ENCODE measurements at regions of chr16 and their contacts with region 1.

Region 1: DNA sequence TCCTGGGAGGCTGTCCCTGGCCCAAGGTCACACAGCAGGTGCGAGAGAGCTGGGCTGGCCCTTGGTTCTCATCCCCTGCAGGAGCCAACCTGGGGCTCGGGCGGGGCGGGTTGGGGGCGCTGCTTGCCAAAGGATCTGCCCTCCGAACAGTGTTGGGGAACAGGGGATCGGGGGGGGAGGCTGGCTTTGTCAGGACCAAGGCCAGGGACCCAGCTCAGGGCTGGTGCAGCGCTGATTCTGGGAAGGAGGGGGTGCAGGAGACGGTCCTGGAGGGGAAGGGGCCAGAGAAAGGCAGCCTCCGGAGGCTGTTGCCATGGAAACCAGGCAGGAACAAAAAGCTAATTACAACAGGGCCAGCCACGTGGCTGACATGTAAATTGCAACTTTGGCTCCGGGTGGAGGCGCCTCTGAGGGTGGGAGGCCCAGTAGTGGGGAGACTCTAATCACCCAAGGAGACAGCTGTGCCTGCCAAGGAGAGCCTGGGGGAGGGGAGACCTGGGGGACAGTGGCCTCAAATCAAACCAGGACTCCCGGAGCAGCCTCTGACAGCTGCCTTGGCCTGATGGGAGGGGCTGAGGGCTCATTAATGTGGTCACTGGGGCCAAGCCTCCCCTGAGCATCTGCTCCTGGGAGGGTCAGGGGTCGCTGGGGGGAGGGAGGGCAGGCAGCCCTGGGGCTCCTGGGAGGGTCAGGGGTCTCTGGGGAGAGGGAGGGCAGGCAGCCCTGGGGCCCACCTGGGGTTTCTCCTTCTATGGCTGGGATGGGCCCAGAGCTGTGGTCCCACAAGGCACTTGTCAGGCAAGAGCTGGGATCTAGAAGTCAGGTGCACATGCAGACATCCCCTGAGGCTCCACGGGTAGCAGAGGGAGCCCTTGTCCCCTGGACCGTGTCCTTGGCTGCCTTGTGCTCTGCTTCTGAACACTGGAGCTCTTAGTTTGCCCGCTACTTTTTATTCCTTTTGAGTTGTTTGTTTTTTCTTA is 1.4 kb downstream of the TUBB3 start:
- DNase-seq: peak in 8 of 14 experiments; percentile 29 to 77 (median 40)
- ATAC-seq: peak; percentile 53
- H3K4me3 ChIP-seq: no peak overlapping the region
- H3K4me3 Mint-ChIP-seq: no peak overlapping the region
- H3K27ac ChIP-seq: no peak overlapping the region
- H3K27ac Mint-ChIP-seq: no peak overlapping the region
- H3K4me1 ChIP-seq: peaks cover 67% of the 10 kb centered on the region
- H3K4me1 Mint-ChIP-seq: peaks cover 35% of the 10 kb centered on the region
- H3K27me3 ChIP-seq: peaks cover 67 to 71% of the 10 kb centered on the region in 2 experiments
- H3K27me3 Mint-ChIP-seq: peaks cover 32% of the 10 kb centered on the region
- CTCF ChIP-seq: no peak

Region 2: DNA sequence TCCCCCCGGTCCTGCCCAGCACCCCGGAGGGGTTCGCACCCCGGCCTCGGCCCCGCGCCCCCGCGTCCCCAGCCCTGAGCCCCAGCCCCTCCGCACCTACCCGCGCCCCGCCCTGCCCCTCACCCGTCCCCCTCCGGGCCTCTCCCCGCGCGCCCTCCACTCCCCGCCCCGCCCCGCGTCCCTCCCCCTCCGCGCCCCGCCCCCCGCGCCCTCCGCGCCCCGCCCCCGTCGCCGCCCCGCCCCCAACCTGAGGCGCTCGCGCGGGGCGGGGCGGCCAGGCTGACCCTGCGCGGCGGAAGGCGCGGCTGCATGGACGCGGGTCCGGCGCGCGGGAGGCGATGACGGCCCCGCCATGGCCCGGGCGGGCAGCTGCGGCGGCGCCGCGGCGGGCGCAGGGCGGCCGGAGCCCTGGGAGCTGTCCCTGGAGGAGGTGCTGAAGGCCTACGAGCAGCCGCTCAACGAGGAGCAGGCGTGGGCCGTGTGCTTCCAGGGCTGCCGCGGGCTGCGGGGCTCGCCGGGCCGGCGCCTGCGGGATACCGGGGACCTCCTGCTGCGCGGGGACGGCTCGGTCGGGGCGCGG is 96.3 kb before region 1 on chr16 and contains the start of gene SPIRE2:
- CTCF ChIA-PET with region 1: no interaction called
- POLR2A ChIA-PET with region 1: no interaction called
- intact Hi-C with region 1: loop called in 1 of 2 experiments (anchors 5 kb)
- DNase-seq: peak; percentile 49 to 90 (median 68)
- ATAC-seq: peak; percentile 98
- H3K4me3 ChIP-seq: no peak within 1 kb of the TSS
- H3K4me3 Mint-ChIP-seq: peak within 1 kb of the TSS; percentile 27
- H3K27ac ChIP-seq: no peak within 1 kb of the TSS
- H3K27ac Mint-ChIP-seq: no peak within 1 kb of the TSS
- H3K4me1 ChIP-seq: peaks cover 12% of the 10 kb centered on the region
- H3K4me1 Mint-ChIP-seq: peaks cover 4% of the 10 kb centered on the region
- H3K27me3 ChIP-seq: peaks cover 14 to 25% of the 10 kb centered on the region in 2 experiments
- H3K27me3 Mint-ChIP-seq: peaks cover 29% of the 10 kb centered on the region
- CTCF ChIP-seq: no peak
- total RNA-seq, gene SPIRE2: 1.1 TPM

Region 3: DNA sequence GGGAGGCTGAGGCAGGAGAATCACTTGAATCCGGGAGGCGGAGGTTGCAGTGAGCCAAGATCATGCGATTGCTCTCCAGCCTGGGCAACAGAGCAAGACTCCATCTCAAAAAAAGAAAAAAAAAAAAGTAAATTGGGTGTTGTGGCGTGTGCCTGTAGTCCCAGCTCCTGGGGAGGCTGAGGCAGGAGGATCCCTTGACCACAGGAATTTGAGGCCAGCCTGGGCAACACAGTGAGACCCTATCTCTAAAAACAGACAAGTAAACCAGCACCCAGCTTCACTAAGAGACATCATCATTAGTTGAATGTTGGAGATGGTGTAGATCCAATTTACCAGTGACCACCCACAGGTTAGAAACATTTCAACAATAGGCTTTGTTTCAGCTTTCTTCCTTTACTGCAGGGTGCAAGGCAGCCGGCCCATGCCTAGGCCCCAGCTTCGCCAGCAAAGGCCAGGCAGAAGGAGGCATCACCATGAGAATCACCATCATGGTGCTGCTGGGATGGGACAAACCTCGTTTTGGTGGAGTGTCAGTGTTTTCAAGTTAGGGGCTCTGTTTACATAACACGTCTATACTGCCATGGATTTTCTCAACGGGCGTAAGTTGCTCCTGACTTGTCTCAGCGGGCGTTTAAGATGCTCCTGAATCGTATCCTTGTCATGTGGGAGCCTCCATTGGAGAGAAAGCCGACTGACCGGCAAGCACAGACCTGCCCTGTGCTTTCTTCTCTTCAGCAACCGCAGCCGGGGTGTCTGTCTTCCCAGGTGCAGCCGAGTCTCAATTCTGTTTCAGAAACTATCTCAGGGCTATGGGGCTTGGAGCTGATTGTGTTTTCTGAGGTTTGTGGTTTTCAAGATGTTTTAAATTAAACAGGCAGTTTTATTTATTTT is 43.9 kb before region 1 on chr16:
- CTCF ChIA-PET with region 1: no interaction called
- POLR2A ChIA-PET with region 1: no interaction called
- intact Hi-C with region 1: no loop called
- DNase-seq: no peak
- ATAC-seq: no peak
- H3K4me3 ChIP-seq: no peak overlapping the region
- H3K4me3 Mint-ChIP-seq: no peak overlapping the region
- H3K27ac ChIP-seq: no peak overlapping the region
- H3K27ac Mint-ChIP-seq: peak overlapping the region; percentile 28
- H3K4me1 ChIP-seq: no peaks in the 10 kb centered on the region
- H3K4me1 Mint-ChIP-seq: peaks cover 7% of the 10 kb centered on the region
- H3K27me3 ChIP-seq: no peaks in the 10 kb centered on the region
- H3K27me3 Mint-ChIP-seq: no peaks in the 10 kb centered on the region
- CTCF ChIP-seq: no peak

Region 4: DNA sequence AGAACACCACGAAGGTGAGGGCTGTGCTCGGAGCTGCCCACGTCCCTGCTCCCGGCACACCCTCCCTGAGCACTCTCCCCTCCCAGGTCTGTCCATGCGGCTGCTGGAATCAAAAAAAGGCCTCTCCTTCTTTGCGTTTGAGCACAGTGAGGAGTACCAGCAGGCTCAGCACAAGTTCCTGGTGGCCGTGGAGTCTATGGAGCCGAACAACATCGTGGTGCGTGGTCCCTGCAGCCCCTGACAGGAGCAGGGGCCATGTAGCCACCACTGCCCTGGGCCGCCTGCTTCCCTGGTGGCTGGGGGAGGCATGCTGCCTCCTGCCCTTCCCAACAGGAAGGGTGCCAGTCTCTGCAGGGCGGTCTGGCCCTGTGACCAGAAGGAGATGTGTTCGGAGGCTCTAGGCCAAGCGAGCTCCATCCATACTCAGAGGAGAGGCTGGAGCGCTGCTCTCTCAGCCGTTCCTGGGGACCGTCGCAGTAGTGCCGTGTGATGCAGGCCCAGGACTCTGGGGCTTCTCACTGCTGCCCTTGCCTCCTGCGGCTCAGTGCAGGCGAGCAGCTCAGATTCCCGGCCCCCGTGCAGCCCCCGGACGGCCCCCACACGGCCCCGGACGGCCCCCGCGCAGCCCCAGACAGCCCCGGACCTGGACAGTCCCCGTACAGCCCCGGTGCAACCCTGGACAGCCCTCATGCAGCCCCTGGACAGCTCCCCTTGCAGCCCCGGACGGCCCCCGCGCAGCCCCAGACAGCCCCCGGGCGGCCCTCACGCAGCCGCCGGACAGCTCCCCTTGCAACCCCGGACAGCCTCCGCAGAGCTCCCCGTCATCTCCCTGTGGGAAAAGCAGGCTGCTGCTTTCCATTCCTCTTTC is 30.7 kb before region 1 on chr16:
- CTCF ChIA-PET with region 1: no interaction called
- POLR2A ChIA-PET with region 1: no interaction called
- intact Hi-C with region 1: no loop called
- DNase-seq: no peak
- ATAC-seq: no peak
- H3K4me3 ChIP-seq: no peak overlapping the region
- H3K4me3 Mint-ChIP-seq: no peak overlapping the region
- H3K27ac ChIP-seq: no peak overlapping the region
- H3K27ac Mint-ChIP-seq: no peak overlapping the region
- H3K4me1 ChIP-seq: peaks cover 8% of the 10 kb centered on the region
- H3K4me1 Mint-ChIP-seq: no peaks in the 10 kb centered on the region
- H3K27me3 ChIP-seq: no peaks in the 10 kb centered on the region
- H3K27me3 Mint-ChIP-seq: no peaks in the 10 kb centered on the region
- CTCF ChIP-seq: no peak

Region 5: GRCh38 chr16:89945670-89946069 is 21.1 kb after region 1 on chr16:
- CTCF ChIA-PET with region 1: no interaction called
- POLR2A ChIA-PET with region 1: no interaction called
- intact Hi-C with region 1: loop called (anchors 1 to 2 kb)
- DNase-seq: no peak
- ATAC-seq: no peak
- H3K4me3 ChIP-seq: no peak overlapping the region
- H3K4me3 Mint-ChIP-seq: no peak overlapping the region
- H3K27ac ChIP-seq: no peak overlapping the region
- H3K27ac Mint-ChIP-seq: no peak overlapping the region
- H3K4me1 ChIP-seq: peaks cover 31% of the 10 kb centered on the region
- H3K4me1 Mint-ChIP-seq: peaks cover 3% of the 10 kb centered on the region
- H3K27me3 ChIP-seq: peaks cover 11 to 24% of the 10 kb centered on the region in 2 experiments
- H3K27me3 Mint-ChIP-seq: peaks cover 22% of the 10 kb centered on the region
- CTCF ChIP-seq: no peak